ENCODE measurements at regions of chr16 and their contacts with region 1.

Region 1: GRCh38 chr16:19067349-19068236 is at the start of gene COQ7:
- ATAC-seq: peak; percentile 92 to 95 (median 93)
- H3K4me3 ChIP-seq: peak within 1 kb of the TSS; percentile 67 to 98 (median 95)
- H3K27ac ChIP-seq: peak within 1 kb of the TSS; percentile 99
- H3K4me1 ChIP-seq: peaks cover 0 to 12% of the 10 kb centered on the region in 2 donors
- total RNA-seq, gene COQ7: 10.1 to 33.4 (median 20.3) TPM

Region 2: DNA sequence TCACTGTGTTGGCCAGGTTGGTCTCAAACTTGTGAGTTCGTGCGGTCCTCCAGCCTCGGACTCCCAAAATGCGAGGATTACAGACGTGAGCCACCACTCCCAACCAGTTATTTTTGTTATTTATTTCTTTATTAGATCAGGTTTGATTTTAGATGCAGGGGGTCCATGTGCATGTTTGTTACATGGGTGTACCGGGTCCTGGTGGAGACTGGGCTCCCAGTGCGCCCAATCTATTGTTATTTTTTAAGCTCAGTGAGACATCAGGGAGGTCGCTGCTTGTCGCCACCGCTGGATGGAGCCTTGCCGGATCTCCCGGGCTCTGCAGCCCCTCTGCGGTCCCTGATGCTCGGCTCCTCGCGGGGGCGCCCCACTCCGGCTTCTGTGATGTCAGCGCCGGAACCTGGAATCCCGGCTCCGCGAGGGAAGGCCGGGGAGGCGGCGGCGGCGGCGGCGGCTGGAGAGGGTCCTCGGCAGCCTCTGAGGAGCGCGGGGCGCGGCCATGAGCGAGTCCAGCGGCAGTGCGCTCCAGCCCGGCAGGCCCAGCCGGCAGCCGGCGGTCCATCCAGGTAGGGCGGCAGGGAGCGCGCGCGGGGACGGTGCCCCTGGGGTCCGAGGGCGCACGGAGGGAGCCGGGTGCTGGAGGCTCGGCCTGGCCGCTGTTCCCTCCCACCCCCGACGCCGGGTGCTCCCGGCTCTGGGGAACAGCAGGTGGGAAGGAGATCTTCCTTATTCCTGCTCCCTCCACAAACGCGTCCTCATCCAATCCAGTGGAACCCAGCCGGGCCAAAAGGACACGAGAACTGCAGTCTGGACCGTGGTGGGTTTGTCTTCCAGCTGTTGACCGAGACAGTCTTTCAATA is 83.8 kb before region 1 on chr16 and contains the start of gene TMC7:
- in situ Hi-C with region 1: loop called in 1 of 9 experiments (anchors 10 kb)
- ATAC-seq: peak; percentile 94 to 99 (median 99)
- H3K4me3 ChIP-seq: peak within 1 kb of the TSS; percentile 54 to 94 (median 91)
- H3K27ac ChIP-seq: peak within 1 kb of the TSS; percentile 60 to 82
- H3K4me1 ChIP-seq: peaks cover 0 to 5% of the 10 kb centered on the region in 2 donors
- total RNA-seq, gene TMC7: 0.41 to 2.5 (median 1.5) TPM

Region 3: DNA sequence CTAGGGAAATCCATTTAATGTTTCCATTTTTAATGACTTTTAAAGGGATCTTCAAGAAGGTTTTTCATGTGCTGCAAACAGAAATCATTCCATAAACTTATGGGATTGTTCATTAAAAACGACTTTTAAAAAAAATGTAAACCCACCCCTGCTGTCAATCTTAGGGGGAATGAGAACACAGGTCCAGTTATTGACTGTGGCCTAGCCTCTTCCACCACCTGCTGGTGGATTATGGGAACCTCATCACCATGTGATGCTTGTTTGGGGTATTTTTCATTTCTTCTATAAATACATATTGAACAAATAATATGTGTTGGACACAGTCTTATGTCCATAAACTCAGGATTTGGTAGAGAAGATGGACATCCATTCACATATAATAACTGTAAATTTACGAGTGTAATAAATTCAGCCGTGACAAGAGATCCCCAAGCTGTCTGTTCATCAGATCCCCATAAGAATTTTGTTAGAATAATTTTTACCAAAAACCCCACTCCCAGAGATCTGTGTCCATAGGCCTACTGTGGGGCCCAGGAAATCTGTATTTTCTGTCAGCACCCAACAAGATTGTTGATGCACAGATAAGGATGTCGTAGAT is 308.1 kb after region 1 on chr16:
- in situ Hi-C with region 1: loop called in 1 of 9 experiments (anchors 10 kb)
- ATAC-seq: peak; percentile 52 to 81 (median 66)
- H3K4me3 ChIP-seq: no peak overlapping the region
- H3K27ac ChIP-seq: no peak overlapping the region
- H3K4me1 ChIP-seq: no peaks in the 10 kb centered on the region

Region 4: DNA sequence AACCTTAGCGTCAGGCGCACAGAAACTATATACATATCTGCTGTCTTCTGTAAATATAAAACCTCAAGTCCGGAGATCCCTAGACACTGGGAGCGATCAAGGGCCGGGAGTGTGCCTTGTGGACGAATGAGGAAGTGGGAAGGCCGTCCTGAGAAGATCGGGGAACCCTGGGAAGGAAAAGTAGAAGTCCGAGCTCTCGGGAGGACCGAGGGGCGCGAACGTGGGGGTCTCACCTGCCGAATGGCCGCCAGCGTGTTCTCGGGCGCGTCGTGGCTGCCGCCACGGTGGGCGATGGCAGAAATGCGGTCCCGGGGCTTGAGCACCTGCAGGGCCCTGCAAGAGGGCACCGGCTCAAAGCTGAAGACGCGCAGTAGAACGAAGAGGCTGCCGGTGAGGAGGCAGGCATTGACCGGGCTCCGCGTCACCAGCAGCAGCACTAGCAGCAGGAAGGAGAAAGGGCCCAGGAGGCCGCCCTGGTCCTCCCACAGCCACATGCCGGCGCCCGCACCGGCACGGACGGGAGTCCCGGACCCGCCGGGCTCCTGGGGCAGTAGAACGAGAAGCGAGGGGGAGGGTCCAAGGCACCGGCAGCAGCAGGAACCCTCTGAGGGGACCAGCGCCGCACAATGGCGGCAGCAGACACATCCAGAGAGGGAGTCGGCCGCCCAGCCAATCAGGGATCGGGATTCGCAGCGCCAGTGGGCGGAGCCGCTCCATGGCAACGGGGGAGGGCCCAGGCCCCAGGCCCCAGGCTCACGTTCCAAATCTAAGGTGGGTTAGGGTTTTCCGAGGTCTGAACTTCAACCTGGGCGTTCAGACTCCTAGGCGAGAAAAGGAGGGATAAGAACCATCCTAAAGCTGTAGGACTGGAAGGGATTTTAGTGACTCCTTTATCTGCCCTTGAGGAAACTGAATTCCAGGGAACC is 454.1 kb after region 1 on chr16 and contains the start of gene GDE1:
- in situ Hi-C with region 1: loop called in 1 of 9 experiments (anchors 25 kb)
- ATAC-seq: peak; percentile 66 to 88 (median 84)
- H3K4me3 ChIP-seq: peak within 1 kb of the TSS; percentile 59 to 82 (median 76)
- H3K27ac ChIP-seq: peak within 1 kb of the TSS; percentile 79 to 82
- H3K4me1 ChIP-seq: peaks cover 10 to 38% of the 10 kb centered on the region in 2 donors
- total RNA-seq, gene GDE1: 30.2 to 130 (median 48.5) TPM

Measured in motor neuron (in vitro differentiated cells).